ENCODE measurements at regions of chr11 and their contacts with region 1.

Region 1: DNA sequence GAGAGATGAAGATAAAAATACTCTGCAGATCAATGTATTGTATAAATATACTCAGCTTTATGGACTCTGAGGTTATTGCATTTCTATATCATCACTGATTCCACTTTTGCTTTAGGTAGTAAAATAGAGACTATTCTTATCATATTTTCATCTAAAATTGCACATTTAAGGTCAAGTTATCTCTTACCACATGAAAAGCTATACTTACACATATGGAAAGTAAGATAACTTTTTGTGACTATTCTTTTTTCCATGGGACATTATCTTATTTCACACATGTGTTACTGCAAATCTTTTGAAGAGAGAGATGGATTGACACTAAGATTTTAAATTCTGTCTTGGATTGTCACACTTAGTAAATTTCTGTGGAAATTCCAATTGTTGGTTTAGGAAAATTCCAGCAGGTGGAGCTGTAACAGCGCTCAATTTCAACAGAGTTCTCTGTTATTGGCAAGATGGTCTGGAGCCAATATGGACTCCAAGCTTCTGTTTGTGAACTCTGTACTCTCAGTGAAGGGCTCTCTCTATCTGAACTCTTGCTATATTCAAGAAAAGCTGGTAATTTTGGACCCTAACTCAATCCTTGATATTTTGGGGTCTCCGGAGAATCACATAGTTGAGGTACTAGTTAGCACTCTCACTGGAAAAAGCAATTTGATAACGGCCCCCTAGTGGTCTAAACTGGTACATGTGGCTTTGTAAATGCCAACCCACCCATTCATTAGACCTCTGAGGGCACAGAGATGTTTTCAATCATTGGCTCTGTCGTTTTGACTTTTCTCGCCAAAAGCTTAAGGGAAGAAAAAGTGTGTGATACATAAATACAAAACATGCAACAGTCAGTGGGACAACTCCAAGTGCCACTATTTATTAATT is 429.7 kb downstream of the ETS1 start:
- ATAC-seq: peak in 5 of 8 experiments; percentile 38 to 90 (median 85)
- H3K4me3 ChIP-seq: no peak overlapping the region
- H3K27ac ChIP-seq: no peak overlapping the region
- H3K4me1 ChIP-seq: peaks cover 0 to 7% of the 10 kb centered on the region in 2 donors

Region 2: GRCh38 chr11:127939000-127939399 is 218.7 kb before region 1 on chr11:
- in situ Hi-C with region 1: no loop called
- ATAC-seq: no peak
- H3K4me3 ChIP-seq: no peak overlapping the region
- H3K27ac ChIP-seq: no peak overlapping the region
- H3K4me1 ChIP-seq: peaks cover 0 to 5% of the 10 kb centered on the region in 2 donors

Region 3: DNA sequence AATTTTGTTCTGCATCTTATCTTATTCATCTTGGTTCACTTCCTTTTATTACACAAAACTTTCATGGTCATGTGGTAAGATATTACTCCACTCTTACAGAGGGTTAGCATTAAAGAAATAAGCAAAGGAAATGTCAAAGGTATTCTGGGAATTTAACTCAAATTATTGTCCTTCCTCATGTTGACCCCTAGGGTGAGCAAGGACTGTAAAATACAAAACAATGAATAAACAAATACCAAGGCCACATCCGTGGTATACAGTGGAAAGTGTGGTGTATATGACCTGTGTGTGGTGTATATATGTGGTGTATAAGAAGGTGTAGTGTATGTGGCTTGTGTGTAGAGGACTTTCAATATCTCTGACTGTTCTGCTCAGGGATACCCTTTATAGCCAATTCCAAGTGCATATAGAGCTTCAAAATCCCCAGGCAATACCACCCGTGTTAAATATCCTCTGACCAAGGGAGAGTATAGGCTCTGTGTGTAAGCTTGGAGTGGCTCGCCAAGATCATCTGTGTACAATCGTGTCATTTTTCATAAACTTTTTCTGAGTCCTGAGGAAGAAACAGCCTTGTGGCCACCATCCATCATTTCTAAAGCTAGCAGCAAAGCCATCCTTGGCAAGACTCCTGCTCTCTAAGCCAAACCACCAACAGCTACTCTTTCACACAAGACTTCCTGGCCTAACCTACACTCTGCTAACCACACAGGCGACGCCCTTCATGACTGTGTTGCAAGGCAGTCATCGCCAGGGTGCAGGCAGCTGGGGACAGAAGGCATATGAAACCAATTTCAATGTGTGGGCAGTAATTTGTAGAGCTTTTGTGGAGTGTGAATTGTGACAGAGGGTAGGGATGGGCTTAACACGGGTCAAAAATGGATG is 118.3 kb before region 1 on chr11:
- in situ Hi-C with region 1: loop called in 1 of 9 experiments (anchors 10 kb)
- ATAC-seq: peak in 3 of 8 experiments; percentile 49 to 100 (median 100)
- H3K4me3 ChIP-seq: no peak overlapping the region
- H3K27ac ChIP-seq: no peak overlapping the region
- H3K4me1 ChIP-seq: peaks cover 4 to 5% of the 10 kb centered on the region in 2 donors